K562 (cell line): ENCODE measurements at regions of chr9 and their contacts with region 1.

Region 1: GRCh38 chr9:127423934-127424675 is at the start of gene ZNF79:
- DNase-seq: peak; percentile 93 to 96 (median 94)
- ATAC-seq: peak; percentile 90
- H3K4me3 ChIP-seq: peak within 1 kb of the TSS; percentile 87
- H3K27ac ChIP-seq: peak within 1 kb of the TSS; percentile 81
- H3K4me1 ChIP-seq: peaks cover 32 to 33% of the 10 kb centered on the region in 2 experiments
- H3K27me3 ChIP-seq: no peaks in the 10 kb centered on the region
- CTCF ChIP-seq: no peak
- EP300 ChIP-seq: no peak
- POLR2A ChIP-seq: peak; percentile 90
- RAD21 ChIP-seq: no peak
- polyA plus RNA-seq, gene ZNF79: 0.62 to 0.70 TPM

Region 2: GRCh38 chr9:127224178-127224882 is 199.8 kb before region 1 on chr9:
- CTCF ChIA-PET with region 1: no interaction called
- POLR2A ChIA-PET with region 1: interaction called, 4 read pairs
- in situ Hi-C with region 1: no loop called
- intact Hi-C with region 1: loop called (anchors 10 kb)
- DNase-seq: peak; percentile 84 to 98 (median 96)
- ATAC-seq: peak; percentile 90
- H3K4me3 ChIP-seq: peak overlapping the region; percentile 57
- H3K27ac ChIP-seq: peak overlapping the region; percentile 64; the same call in 2 of the 3 replicates
- H3K4me1 ChIP-seq: peaks cover 5 to 21% of the 10 kb centered on the region in 2 experiments; a peak in 4 of 5 replicates
- H3K27me3 ChIP-seq: peaks cover 11 to 45% of the 10 kb centered on the region in 2 experiments; a peak in 4 of 5 replicates
- CTCF ChIP-seq: peak in 1 of 3 experiments; percentile 27; a peak in 1 of 6 replicates
- EP300 ChIP-seq: no peak
- POLR2A ChIP-seq: no peak
- RAD21 ChIP-seq: no peak

Region 3: DNA sequence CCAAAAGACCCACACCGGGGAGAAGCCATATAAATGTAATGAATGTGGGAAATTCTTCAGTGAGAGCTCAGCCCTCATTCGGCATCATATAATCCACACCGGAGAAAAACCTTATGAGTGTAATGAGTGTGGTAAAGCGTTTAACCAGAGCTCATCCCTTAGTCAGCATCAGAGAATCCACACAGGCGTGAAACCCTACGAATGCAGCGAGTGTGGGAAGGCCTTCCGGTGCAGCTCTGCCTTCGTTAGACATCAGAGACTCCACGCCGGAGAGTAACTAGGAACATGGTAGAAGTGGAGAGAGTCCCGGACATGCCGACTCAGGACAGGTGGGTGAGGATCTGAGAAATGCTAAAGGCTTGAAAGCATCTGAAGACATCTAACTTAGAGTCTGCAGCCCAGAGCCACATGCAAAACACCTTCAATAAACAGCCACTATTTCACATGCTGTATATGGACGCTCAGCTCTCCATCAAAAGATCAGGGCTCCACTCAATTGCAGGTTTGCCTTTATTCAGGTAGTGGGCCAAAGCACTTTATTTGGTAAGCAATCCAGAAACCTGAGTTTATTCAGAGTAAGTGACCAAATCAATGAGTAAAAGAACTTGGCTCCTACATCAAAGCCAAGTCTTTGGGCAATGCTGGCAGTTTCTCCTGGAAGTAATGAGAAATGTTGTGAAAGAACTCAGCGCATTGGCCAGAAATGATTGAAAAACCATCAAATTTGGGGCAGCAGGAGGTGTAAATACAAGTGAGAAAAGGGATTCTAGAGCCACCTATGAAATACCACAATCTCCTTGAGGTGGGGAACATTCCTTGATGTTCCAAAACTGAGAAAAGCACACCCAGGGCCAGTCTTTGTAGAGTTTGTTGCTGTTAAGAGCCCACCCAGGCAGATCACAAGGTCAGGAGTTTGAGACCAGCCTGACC is 21.1 kb after region 1 on chr9:
- CTCF ChIA-PET with region 1: no interaction called
- POLR2A ChIA-PET with region 1: interaction called, 30 read pairs
- in situ Hi-C with region 1: no loop called
- intact Hi-C with region 1: no loop called
- DNase-seq: peak in 1 of 4 experiments; percentile 32
- ATAC-seq: peak; percentile 7
- H3K4me3 ChIP-seq: no peak overlapping the region
- H3K27ac ChIP-seq: no peak overlapping the region
- H3K4me1 ChIP-seq: peaks cover 6 to 12% of the 10 kb centered on the region in 2 experiments; a peak in 3 of 5 replicates
- H3K27me3 ChIP-seq: no peaks in the 10 kb centered on the region
- CTCF ChIP-seq: no peak
- EP300 ChIP-seq: no peak
- POLR2A ChIP-seq: no peak; the same call in none of the 2 replicates
- RAD21 ChIP-seq: no peak